ENCODE measurements at regions of chr12 and their contacts with region 1.

Region 1: GRCh38 chr12:91877022-91877421 is 268.6 kb downstream of the BTG1 start:
- DNase-seq: no peak
- H3K4me3 Mint-ChIP-seq: no peak overlapping the region
- H3K27ac Mint-ChIP-seq: no peak overlapping the region
- H3K4me1 Mint-ChIP-seq: no peaks in the 10 kb centered on the region
- H3K27me3 Mint-ChIP-seq: no peaks in the 10 kb centered on the region
- CTCF ChIP-seq: no peak

Region 2: DNA sequence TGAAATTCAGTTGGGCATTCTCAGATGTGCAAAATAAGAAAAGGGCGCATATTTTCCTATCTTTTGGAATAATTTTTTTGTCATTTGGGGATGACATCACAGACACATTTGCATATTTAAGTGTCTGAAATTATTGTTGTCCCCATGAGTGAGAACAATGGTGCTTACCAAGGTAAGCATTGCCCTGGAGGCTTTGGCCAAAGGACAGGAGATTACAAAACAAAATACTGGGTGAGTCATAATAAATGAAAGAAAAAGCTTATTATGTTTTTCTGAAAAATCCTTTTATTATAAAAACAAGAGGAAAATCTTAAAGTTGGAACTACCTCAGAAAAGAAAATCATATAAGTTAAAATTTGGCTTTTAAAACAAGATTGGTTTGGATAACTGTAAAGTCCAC is 13.7 kb after region 1 on chr12:
- CTCF ChIA-PET with region 1: no interaction called
- POLR2A ChIA-PET with region 1: interaction called, 10 read pairs
- intact Hi-C with region 1: no loop called
- DNase-seq: peak; percentile 73
- H3K4me3 Mint-ChIP-seq: no peak overlapping the region
- H3K27ac Mint-ChIP-seq: peak overlapping the region; percentile 55
- H3K4me1 Mint-ChIP-seq: peaks cover 23% of the 10 kb centered on the region
- H3K27me3 Mint-ChIP-seq: no peaks in the 10 kb centered on the region
- CTCF ChIP-seq: no peak